Astrocyte of the cerebellum (primary cell): ENCODE measurements at regions of chr22 and their contacts with region 1.

Region 1: DNA sequence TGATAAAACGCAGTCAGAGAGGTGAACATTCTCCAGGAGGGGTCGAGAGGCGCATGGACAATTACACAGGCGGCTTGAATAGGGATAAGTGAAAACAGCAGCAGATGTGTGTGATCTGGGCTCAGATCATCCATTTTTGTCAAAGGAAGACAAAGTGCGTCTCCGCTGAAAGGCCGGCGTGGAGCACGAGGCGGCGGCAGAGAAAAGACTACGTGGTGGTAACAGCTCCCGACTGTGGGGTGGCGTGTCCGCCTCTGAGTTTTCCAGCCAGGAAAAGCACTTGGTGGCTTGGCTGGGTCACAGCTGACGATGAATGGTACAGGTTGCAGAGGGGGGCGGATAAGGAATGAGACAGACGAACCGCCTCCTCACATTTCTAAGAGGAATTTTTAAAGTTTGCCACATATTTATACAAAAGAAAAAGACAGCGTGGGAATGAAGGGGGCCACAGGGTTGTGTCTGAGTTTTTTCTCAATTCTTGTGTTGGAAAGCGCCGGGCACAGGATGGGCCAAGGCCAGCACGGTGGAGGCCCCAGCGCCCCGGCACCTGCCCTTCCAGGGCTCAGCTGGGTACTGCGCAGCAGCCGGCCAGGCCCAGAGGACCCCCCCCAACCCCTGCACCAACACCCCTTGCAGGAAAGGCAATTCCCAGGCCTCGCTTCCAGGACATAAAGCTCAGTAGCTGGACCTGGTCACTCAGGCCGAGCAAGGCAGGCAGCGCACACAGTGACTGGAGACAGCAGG is 80.4 kb downstream of the TRMU start:
- DNase-seq: peak; percentile 40
- H3K4me3 ChIP-seq: no peak overlapping the region
- CTCF ChIP-seq: peak; percentile 19

Region 2: GRCh38 chr22:46335201-46336118 is 80.5 kb before region 1 on chr22 and contains the start of gene TRMU:
- in situ Hi-C with region 1: loop called (anchors 10 kb)
- DNase-seq: peak; percentile 38
- H3K4me3 ChIP-seq: peak within 1 kb of the TSS; percentile 76
- CTCF ChIP-seq: no peak

Region 3: DNA sequence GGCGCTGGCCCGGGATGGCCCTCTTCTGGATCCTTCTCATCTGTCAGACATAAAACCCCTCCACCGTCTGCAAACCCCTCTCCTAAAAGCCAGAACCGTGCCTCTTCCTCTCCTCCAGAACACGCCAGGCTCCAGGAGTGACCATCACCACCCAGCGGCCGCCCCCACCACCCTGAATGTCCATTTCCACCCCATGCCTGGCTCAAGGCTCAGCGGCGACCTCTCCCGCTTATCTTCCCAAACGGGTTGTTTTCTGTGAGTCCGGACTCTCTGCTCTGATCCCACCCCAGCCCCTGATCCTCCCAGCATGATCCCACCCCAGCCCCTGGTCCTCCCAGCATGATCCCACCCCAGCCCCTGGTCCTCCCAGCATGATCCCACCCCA is 83.8 kb after region 1 on chr22:
- in situ Hi-C with region 1: loop called (anchors 5 kb)
- DNase-seq: no peak
- H3K4me3 ChIP-seq: no peak overlapping the region
- CTCF ChIP-seq: no peak